ENCODE measurements at regions of chr16 and their contacts with region 1.

Region 1: DNA sequence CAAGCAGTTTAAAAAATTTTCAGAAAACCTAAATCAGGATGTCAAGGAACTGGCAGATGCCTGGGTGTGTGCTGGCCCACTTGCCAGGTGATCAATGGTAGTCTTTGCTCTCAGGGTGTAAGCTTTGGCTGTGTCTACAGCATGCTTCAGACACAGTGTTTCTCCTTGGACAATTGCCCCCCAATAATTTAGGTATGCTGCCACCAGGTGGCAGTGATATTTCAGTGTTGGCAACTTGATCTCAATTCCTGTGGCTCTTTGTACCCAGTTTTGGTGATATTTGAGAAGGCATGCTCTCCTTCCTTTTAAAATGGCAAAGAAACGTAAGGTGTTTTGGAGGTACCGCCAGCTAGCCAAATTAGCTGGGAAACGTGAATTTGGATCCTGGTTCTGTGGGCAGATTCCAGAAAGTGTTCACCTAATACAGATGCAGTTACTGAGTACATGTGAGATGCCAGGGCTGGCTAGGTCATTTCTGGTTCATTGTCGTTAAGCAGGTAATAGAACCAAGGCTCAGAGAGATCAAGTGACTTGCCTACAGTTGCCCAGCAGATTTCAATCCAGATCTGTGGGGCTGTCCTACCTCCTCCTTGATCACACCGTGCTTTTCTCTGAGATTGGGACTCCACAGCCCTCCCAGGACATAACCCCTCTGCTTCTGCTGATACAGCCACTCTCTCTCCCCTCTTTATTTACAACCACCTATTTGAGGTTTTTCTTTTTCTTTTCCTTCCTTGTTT is 155.6 kb upstream of the PLCG2 start:
- DNase-seq: no peak
- H3K4me3 ChIP-seq: no peak overlapping the region
- H3K27ac ChIP-seq: no peak overlapping the region
- H3K4me1 ChIP-seq: peaks cover 0 to 36% (median 21%) of the 10 kb centered on the region in 4 donors
- H3K27me3 ChIP-seq: no peaks in the 10 kb centered on the region
- CTCF ChIP-seq: peak; percentile 32 to 76 (median 58)
- EP300 ChIP-seq: no peak
- POLR2A ChIP-seq: no peak

Region 2: DNA sequence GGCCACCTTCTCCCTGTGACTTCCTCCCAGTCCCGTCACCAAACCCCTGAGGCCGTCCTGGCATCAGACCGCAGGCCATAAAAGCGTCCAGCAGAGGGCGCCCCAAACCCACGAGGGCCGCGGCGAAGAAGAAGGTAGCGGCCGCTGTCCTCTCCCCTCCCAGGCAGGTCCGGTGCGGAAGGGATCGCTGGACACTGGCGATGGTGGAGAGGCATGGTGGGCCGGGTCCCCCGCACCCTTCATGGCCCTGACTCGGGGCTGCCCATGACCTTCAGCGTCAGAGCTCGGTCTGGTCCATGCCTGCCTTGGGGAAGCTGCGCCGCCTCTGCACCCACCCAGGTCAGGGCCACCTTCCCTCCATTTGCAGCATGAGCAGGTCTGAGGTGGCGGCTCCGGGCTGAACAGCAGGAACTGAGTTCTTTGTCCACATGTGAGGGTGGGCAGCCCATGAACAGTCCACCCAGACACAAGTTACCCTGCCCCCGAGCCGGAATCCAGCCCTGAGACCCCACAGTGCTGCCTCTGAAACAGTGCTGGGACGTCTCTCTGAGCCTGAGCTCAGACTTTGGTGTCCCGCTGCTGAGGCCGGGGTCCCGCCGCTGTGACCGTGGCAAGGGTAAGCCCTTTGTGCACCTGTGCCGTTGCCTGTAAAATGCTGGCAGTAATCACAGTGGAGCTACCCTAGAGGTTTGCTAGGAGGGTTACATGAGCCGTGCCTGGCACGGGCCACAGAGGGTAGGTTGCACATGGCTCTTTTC is 219.7 kb before region 1 on chr16:
- intact Hi-C with region 1: loop called (anchors 5 kb)
- DNase-seq: peak; percentile 90
- H3K4me3 ChIP-seq: peak overlapping the region in 3 of 4 donors; percentile 19 to 34 (median 30)
- H3K27ac ChIP-seq: no peak overlapping the region
- H3K4me1 ChIP-seq: peaks cover 0 to 14% (median 6%) of the 10 kb centered on the region in 4 donors
- H3K27me3 ChIP-seq: no peaks in the 10 kb centered on the region
- CTCF ChIP-seq: peak; percentile 89 to 98 (median 94)
- EP300 ChIP-seq: no peak
- POLR2A ChIP-seq: no peak

Region 3: GRCh38 chr16:81551151-81551808 is 72.3 kb before region 1 on chr16:
- intact Hi-C with region 1: no loop called
- DNase-seq: no peak
- H3K4me3 ChIP-seq: no peak overlapping the region
- H3K27ac ChIP-seq: peak overlapping the region in 1 of 4 donors; percentile 32
- H3K4me1 ChIP-seq: peaks cover 0 to 37% (median 25%) of the 10 kb centered on the region in 4 donors
- H3K27me3 ChIP-seq: no peaks in the 10 kb centered on the region
- CTCF ChIP-seq: no peak
- EP300 ChIP-seq: no peak
- POLR2A ChIP-seq: no peak

Region 4: DNA sequence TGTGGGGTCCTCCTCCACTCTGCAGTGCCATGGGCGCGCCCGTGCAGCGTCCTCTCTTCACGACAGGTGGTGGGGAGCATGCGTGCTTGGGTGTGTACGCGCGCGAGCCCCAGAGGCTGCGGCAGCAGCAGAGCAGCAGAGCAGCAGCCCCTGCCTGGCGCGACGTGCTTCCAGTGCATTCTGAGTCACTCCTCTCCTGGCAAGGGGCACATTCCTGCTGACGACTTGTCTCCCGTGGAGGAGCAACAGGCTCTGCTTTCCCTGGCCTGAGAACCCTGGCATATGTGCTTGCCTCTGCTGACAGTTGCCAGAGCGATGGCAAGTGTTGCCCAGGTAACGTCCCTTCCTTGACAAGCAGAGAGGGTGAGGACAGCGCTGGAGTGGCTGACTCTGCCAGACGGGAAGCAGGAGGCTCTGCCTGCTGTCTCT is 21.7 kb after region 1 on chr16:
- intact Hi-C with region 1: no loop called
- DNase-seq: peak; percentile 96
- H3K4me3 ChIP-seq: peak overlapping the region in 3 of 4 donors; percentile 14 to 19 (median 15)
- H3K27ac ChIP-seq: peak overlapping the region; percentile 71 to 86 (median 77)
- H3K4me1 ChIP-seq: peaks cover 0 to 44% (median 17%) of the 10 kb centered on the region in 4 donors
- H3K27me3 ChIP-seq: no peaks in the 10 kb centered on the region
- CTCF ChIP-seq: no peak
- EP300 ChIP-seq: peak in 3 of 4 donors; percentile 50 to 90 (median 90)
- POLR2A ChIP-seq: no peak

Region 5: GRCh38 chr16:81696961-81697615 is 73.6 kb after region 1 on chr16:
- intact Hi-C with region 1: loop called (anchors 2 kb)
- DNase-seq: no peak
- H3K4me3 ChIP-seq: no peak overlapping the region
- H3K27ac ChIP-seq: peak overlapping the region; percentile 18 to 95 (median 55)
- H3K4me1 ChIP-seq: peaks cover 0 to 61% (median 45%) of the 10 kb centered on the region in 4 donors
- H3K27me3 ChIP-seq: no peaks in the 10 kb centered on the region
- CTCF ChIP-seq: peak; percentile 32 to 59 (median 56)
- EP300 ChIP-seq: no peak
- POLR2A ChIP-seq: no peak

Region 6: DNA sequence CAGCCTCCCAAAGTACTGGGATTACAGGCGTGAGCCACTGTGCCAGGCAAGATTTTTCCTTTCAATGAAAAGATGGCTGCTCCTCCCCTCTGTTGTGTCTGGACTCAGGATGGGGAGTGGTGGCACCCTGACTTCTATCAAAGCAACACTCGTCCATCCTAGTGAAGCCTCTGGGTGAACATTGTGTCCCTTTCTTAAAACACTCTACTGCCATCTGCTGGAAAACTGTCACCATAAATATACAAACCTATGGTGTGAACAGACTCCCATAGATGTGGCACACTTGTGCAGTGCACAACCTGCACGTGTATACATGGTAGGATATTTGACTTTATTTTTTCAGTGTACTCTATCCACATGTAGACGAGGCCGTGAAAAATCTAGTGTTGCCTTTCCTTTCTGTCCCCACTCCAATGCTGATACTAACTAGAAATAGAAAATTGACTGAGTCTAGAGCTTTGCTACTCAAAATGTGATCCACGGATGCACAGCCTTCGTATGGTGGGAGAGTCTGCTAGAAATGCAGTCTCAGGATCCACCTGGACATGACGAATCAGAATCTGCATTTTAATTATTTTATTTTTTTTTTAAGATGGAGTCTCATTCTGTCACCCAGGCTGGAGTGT is 99.7 kb after region 1 on chr16:
- intact Hi-C with region 1: loop called (anchors 2 kb)
- DNase-seq: no peak
- H3K4me3 ChIP-seq: no peak overlapping the region
- H3K27ac ChIP-seq: peak overlapping the region in 1 of 4 donors; percentile 66
- H3K4me1 ChIP-seq: peaks cover 0 to 29% (median 21%) of the 10 kb centered on the region in 4 donors
- H3K27me3 ChIP-seq: no peaks in the 10 kb centered on the region
- CTCF ChIP-seq: peak; percentile 68 to 77 (median 72)
- EP300 ChIP-seq: no peak
- POLR2A ChIP-seq: no peak